Cardiac septum (tissue), 1 donor: ENCODE measurements at regions of chr9 and their contacts with region 1.

Region 1: GRCh38 chr9:105475302-105475701 is 27.5 kb downstream of the FSD1L start:
- DNase-seq: no peak

Region 2: GRCh38 chr9:105376893-105377292 is 98.4 kb before region 1 on chr9:
- intact Hi-C with region 1: no loop called
- DNase-seq: no peak

Region 3: GRCh38 chr9:105425841-105426436 is 49.4 kb before region 1 on chr9:
- intact Hi-C with region 1: loop called (anchors 10 kb)
- DNase-seq: no peak

Region 4: GRCh38 chr9:105541838-105542237 is 66.5 kb after region 1 on chr9:
- intact Hi-C with region 1: no loop called
- DNase-seq: no peak